WTC11 (cell line): ENCODE measurements at regions of chr1 and their contacts with region 1.

Region 1: DNA sequence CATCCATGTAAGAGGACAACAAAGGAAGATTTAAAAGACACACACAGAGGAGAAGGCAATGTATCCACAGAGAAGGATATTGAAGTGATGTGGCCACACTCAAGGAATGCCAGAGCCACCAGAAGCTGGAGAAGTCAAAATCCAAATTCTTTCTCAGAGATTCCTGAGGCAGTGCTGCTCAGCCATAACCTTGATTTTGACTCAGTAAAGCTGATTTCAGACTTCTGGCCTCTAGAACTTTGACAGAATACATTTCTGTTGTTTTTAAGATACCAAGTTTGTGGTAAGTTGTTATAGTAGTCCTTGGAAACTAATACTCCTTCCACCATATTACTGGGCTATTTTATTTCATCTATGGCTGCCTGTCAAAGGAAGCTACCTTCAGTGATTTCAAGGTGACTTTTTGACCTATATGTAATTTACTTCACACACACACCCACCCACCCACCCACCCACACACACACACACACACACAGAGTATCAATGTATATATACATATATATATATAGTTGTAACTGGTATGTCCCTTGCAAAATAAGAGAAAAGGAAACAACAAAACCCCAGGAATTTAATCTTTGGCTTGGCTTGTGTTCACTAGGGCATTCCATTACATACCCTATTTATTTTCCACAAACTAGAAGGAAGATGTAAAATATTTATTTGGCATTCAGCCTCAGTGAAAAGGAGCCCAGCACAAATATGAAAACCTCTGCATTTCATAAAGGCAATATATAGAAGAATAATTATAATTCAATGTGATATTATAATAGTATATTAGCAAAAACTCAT is 142.1 kb upstream of the PTGFR start:
- DNase-seq: no peak
- ATAC-seq: no peak
- H3K4me3 Mint-ChIP-seq: no peak overlapping the region
- H3K27ac Mint-ChIP-seq: no peak overlapping the region
- H3K4me1 Mint-ChIP-seq: no peaks in the 10 kb centered on the region
- H3K27me3 Mint-ChIP-seq: peaks cover 13% of the 10 kb centered on the region
- CTCF ChIP-seq: no peak

Region 2: DNA sequence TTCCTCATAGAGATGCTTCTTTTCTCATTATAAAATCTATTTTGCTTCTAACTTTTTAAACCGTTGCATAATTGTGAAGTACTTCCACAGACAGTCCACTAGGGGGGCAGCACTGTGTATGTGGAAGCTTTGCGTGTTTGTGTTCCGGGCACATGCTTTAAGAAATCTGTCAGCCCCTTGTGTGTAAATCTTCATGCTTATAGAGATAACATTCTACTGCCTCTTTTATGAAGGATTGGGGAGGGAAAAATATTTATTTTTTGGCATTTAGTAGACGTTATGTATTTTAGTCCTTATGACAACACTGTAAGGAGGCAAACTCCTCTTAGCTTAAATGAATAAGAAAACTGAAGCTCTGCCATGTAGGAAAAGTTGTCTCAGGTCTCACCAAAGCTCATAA is 15.2 kb before region 1 on chr1:
- CTCF ChIA-PET with region 1: interaction called, 10 read pairs
- POLR2A ChIA-PET with region 1: no interaction called
- DNase-seq: no peak
- ATAC-seq: peak; percentile 73
- H3K4me3 Mint-ChIP-seq: no peak overlapping the region
- H3K27ac Mint-ChIP-seq: no peak overlapping the region
- H3K4me1 Mint-ChIP-seq: no peaks in the 10 kb centered on the region
- H3K27me3 Mint-ChIP-seq: peaks cover 10% of the 10 kb centered on the region
- CTCF ChIP-seq: peak; percentile 72

Region 3: GRCh38 chr1:78370356-78370755 is 21.7 kb after region 1 on chr1:
- CTCF ChIA-PET with region 1: no interaction called
- POLR2A ChIA-PET with region 1: no interaction called
- DNase-seq: no peak
- ATAC-seq: no peak
- H3K4me3 Mint-ChIP-seq: no peak overlapping the region
- H3K27ac Mint-ChIP-seq: no peak overlapping the region
- H3K4me1 Mint-ChIP-seq: no peaks in the 10 kb centered on the region
- H3K27me3 Mint-ChIP-seq: peaks cover 3% of the 10 kb centered on the region
- CTCF ChIP-seq: no peak

Region 4: DNA sequence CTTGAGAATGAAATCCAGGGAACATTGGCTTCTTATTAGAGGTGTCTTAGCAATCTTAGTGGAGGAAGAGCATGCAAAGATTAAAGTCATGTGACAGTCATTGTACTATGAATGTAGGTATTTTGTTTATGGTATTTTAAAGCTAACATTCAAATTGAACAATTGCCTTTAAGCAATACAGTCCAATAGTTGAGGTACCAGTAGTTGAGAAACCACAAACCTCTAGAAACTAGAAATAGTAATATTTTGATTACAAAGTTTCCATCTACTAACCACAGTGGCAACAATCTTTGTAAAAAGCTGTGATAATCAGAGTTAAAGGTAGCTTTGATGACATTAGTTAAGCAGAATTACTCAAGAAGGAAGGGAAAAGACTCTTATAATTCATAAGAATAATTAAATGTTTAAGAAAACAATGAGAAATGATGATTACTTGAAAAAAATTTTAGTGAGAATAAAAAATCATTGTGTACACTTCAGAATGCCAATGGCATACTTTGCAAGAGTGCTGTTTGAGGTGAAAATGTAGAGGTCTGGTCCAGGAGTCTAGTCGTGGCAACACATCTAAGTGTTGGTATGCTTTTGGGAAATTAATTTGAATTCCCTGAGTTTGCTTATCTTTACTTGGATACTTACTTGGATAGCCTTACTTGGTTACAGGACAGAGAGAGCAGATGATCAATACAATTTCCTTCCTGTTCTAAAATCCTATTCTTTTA is 37.2 kb after region 1 on chr1:
- CTCF ChIA-PET with region 1: no interaction called
- POLR2A ChIA-PET with region 1: no interaction called
- DNase-seq: no peak
- ATAC-seq: no peak
- H3K4me3 Mint-ChIP-seq: no peak overlapping the region
- H3K27ac Mint-ChIP-seq: no peak overlapping the region
- H3K4me1 Mint-ChIP-seq: no peaks in the 10 kb centered on the region
- H3K27me3 Mint-ChIP-seq: no peaks in the 10 kb centered on the region
- CTCF ChIP-seq: no peak

Region 5: DNA sequence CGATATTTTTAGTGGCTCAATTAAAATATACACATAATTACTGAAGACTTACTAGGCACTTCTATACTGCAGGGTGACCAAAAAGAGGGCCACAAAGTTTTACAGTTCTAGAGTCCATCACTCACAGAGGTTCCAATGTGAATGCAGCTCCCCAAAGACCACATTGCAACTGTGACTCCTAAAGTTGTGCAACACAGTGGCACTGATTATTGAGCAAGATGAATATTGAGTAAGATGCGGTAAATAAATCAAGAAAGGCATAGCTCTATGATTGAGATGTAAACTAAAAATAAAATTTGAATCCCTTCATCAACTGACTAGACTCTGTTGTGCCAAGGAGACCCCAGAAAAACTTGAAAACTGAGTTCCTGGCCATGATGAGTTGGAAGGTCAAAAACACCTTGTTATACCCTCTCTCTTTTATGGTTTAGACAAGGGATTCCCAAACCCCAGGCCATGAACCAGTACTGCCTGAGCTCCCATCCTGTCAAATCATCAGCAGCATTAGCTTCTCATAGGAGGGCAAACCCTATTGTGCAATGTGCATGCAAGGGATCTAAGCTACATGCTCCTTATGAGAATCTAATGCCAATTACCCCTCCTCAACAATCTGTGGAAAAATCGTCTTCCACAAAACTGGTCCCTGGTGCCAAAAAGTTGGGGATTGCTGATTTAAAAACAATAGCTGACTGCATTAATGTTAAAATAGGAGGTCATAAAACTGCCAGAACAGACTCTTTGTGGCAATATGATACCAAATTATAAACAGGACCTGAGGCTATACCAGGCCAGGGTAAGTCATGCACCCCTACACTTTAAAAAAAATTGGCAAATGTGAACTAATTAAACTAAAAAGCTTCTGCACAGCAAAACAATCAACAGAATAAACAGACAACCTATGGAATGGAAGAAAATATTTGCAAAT is 563.5 kb after region 1 on chr1:
- CTCF ChIA-PET with region 1: no interaction called
- POLR2A ChIA-PET with region 1: no interaction called
- DNase-seq: no peak
- ATAC-seq: no peak
- H3K4me3 Mint-ChIP-seq: no peak overlapping the region
- H3K27ac Mint-ChIP-seq: no peak overlapping the region
- H3K4me1 Mint-ChIP-seq: no peaks in the 10 kb centered on the region
- H3K27me3 Mint-ChIP-seq: no peaks in the 10 kb centered on the region
- CTCF ChIP-seq: no peak